BJ (cell line): ENCODE measurements at regions of chr20 and their contacts with region 1.

Region 1: DNA sequence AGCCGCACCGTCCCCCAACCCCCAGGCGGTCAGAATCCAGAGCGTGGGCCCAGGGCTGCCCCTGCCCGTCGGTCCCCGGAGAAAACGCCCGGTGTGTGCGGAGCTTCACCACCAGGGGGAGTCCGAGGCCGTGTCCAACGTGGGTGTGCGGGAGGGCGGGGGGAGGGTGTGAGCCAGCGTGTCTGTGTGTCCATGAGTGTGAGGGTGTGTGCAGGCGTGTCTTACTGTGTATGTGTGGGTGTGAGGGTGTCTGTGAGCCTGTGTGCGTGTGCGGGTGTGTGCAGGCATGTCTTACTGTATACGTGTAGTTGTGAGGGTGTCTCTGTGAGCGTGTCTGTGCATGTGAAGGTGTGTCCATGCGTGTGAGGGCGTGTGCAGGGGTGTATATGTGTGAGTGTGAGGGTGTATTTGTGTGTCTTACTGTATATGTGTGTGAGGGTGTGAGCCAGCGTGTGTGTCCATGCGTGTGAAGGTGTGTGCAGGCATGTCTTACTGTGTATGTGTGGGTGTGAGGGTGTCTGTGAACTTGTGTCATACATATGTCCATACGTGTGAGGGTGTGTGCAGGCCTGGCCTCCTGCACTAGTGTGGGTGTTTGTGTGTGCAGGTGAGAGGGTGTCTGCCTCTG is 24.6 kb upstream of the GATA5 start:
- DNase-seq: no peak
- H3K4me3 ChIP-seq: no peak overlapping the region
- H3K27me3 ChIP-seq: no peaks in the 10 kb centered on the region
- CTCF ChIP-seq: peak; percentile 94

Region 2: DNA sequence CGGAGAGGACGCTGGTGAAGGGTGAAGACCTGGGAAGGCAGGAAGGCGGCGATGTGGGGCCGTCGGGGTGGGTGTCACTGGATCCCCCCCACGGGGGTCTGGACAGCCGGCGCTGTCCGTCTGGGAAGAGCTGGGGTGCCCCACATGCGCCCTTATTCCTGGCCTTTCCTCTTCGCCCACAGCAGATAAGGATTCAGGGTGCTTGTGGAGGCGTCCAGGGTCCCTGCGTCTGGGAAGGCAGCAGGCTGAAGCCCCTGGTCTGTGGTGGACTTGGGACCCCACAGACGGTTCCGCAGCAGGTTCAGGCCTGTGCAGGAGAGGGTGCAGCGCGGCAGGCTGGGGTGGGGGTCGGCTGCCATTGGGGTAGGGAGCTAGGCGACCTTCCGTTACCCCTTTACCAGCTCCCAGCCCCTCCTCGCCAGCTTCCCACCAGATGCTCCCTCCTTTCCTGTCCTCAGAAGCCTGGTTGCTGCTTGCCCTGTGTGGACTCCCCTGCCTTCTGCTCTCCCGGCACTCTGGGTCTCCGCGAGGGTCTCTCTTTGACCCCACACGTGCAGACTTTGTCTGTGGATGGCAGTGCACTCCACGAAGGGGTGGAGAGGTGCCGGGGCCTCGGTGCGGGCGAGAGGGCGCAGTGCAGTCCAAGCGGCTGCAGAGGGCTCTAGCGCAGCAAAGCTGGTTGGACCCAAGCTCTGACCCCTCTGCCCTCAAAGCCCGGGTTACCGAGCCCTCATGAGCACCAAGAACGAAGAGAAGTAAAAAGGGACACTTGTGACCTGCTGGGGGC is 22.5 kb before region 1 on chr20:
- CTCF ChIA-PET with region 1: interaction called, 10 read pairs
- POLR2A ChIA-PET with region 1: no interaction called
- DNase-seq: no peak
- H3K4me3 ChIP-seq: no peak overlapping the region
- H3K27me3 ChIP-seq: peaks cover 34% of the 10 kb centered on the region
- CTCF ChIP-seq: no peak

Region 3: DNA sequence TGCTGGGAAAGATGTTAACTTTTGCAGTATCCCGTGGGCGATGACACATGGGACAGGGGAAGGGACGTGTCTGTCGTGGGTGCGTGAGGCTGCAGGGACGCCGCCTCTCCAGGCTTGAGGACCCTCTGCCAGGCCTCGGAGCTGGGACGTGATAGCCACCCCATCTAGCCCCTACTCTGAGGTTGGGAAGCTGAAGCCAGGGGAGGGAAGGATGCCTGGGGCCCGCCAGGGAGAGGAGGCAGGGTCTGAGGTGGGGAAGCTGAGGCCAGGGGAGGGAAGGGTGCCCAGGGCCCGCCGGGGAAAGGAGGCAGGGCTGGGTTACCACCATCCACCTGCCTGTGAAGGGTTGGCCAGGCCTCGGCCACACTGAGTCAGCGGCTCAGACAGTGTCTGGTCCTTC is 13.6 kb after region 1 on chr20:
- CTCF ChIA-PET with region 1: interaction called, 10 read pairs
- POLR2A ChIA-PET with region 1: no interaction called
- DNase-seq: no peak
- H3K4me3 ChIP-seq: no peak overlapping the region
- H3K27me3 ChIP-seq: peaks cover 2% of the 10 kb centered on the region
- CTCF ChIP-seq: no peak

Region 4: GRCh38 chr20:62616728-62617621 is 116.6 kb after region 1 on chr20:
- CTCF ChIA-PET with region 1: interaction called, 40 read pairs
- POLR2A ChIA-PET with region 1: no interaction called
- DNase-seq: no peak
- H3K4me3 ChIP-seq: no peak overlapping the region
- H3K27me3 ChIP-seq: peaks cover 2% of the 10 kb centered on the region; the same call in 1 of the 2 replicates
- CTCF ChIP-seq: peak; percentile 99

Region 5: GRCh38 chr20:62808211-62808865 is 308.0 kb after region 1 on chr20:
- CTCF ChIA-PET with region 1: interaction called, 11 read pairs
- POLR2A ChIA-PET with region 1: no interaction called
- DNase-seq: no peak
- H3K4me3 ChIP-seq: no peak overlapping the region
- H3K27me3 ChIP-seq: no peaks in the 10 kb centered on the region
- CTCF ChIP-seq: peak; percentile 96